Ovary (tissue), 10 donors: ENCODE measurements at regions of chr10 and their contacts with region 1.

Region 1: DNA sequence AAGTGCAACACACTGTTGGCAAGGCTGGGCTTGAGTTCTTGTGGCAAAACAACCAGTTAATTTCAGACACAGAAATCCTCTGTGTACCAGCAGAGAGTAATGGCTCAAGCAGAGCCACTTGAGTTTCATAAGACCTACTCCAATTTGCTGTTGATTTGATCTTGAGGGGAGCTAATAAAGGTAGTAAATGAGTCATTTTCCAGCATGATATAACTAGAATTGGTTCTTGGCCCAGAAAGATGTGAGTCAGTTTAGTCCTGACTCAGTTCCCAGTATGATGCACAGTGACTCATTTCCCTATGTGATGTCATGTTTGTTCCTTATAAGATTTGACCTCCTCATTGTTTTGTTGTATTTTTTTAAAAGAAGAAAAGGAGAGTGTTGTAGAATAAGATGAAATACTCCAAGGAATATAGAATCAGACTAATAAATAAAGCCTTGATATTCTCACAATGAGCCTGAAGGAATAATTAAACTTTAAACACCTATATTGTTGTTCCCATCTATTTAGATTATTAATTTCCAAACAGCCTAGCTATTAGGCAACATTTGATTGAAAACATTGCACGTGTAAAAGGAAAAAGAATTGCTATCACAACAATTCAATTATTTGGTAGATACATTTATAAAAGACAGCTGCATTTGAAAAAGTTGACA is 186.2 kb downstream of the REEP3 start:
- DNase-seq: peak in 1 of 5 donors; percentile 42
- H3K4me3 ChIP-seq: no peak overlapping the region
- H3K27ac ChIP-seq: no peak overlapping the region
- H3K4me1 ChIP-seq: peaks cover 5% of the 10 kb centered on the region
- H3K27me3 ChIP-seq: no peaks in the 10 kb centered on the region
- CTCF ChIP-seq: no peak
- EP300 ChIP-seq: peak; percentile 91
- POLR2A ChIP-seq: no peak

Region 2: GRCh38 chr10:63166742-63167258 is 540.6 kb before region 1 on chr10:
- intact Hi-C with region 1: loop called in 1 of 4 experiments (anchors 10 kb)
- DNase-seq: peak in 1 of 5 donors; percentile 33
- H3K4me3 ChIP-seq: no peak overlapping the region
- H3K27ac ChIP-seq: no peak overlapping the region
- H3K4me1 ChIP-seq: peaks cover 4% of the 10 kb centered on the region
- H3K27me3 ChIP-seq: no peaks in the 10 kb centered on the region
- CTCF ChIP-seq: peak; percentile 69 to 86 (median 74)
- EP300 ChIP-seq: no peak
- POLR2A ChIP-seq: no peak

Region 3: GRCh38 chr10:63465293-63466143 is 241.9 kb before region 1 on chr10 and contains the start of gene JMJD1C:
- intact Hi-C with region 1: loop called in 1 of 4 experiments (anchors 5 kb)
- DNase-seq: peak; percentile 82 to 90 (median 85)
- H3K4me3 ChIP-seq: peak within 1 kb of the TSS; percentile 66
- H3K27ac ChIP-seq: peak within 1 kb of the TSS; percentile 92 to 95
- H3K4me1 ChIP-seq: no peaks in the 10 kb centered on the region
- H3K27me3 ChIP-seq: no peaks in the 10 kb centered on the region
- CTCF ChIP-seq: peak in 2 of 3 donors; percentile 20 to 34
- EP300 ChIP-seq: no peak
- POLR2A ChIP-seq: peak; percentile 76
- total RNA-seq, gene JMJD1C: 70.9 to 140 (median 80.1) TPM

Region 4: GRCh38 chr10:63521416-63522276 is 185.7 kb before region 1 on chr10:
- intact Hi-C with region 1: loop called in 1 of 4 experiments (anchors 5 kb)
- DNase-seq: peak; percentile 67 to 79 (median 73)
- H3K4me3 ChIP-seq: peak overlapping the region; percentile 75
- H3K27ac ChIP-seq: peak overlapping the region; percentile 96 to 99
- H3K4me1 ChIP-seq: peaks cover 3% of the 10 kb centered on the region
- H3K27me3 ChIP-seq: no peaks in the 10 kb centered on the region
- CTCF ChIP-seq: no peak
- EP300 ChIP-seq: no peak
- POLR2A ChIP-seq: peak; percentile 61

Region 5: GRCh38 chr10:63767138-63767801 is 59.9 kb after region 1 on chr10:
- intact Hi-C with region 1: no loop called
- DNase-seq: no peak
- H3K4me3 ChIP-seq: no peak overlapping the region
- H3K27ac ChIP-seq: no peak overlapping the region
- H3K4me1 ChIP-seq: no peaks in the 10 kb centered on the region
- H3K27me3 ChIP-seq: no peaks in the 10 kb centered on the region
- CTCF ChIP-seq: peak in 1 of 3 donors; percentile 44
- EP300 ChIP-seq: no peak
- POLR2A ChIP-seq: no peak